Activated CD4-positive, alpha-beta memory T cell treated with anti-CD3 and anti-CD28 coated beads for 36 hours (primary cell): ENCODE measurements at regions of chr14 and their contacts with region 1.

Region 1: DNA sequence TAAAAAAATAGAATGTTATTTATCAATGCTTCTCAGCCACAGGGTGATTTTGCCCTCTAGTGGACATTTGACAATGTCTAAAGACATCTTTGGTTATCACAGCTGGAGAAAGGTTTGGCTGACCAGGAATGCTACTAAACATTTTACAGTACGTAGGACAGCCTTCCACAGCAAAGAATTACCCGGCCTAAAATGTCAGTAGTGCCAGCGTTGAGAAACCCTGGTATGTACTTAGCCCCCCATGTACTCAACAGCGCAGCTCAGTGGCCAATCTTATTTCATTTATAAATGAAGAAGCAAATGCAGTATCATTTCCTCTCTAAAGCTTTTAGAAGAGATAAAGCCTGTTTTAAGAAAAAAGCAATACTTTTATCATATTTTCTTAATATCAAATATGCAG is 5.8 kb downstream of the MARK3 start:
- DNase-seq: peak; percentile 47
- H3K4me3 Mint-ChIP-seq: no peak overlapping the region
- H3K27ac Mint-ChIP-seq: no peak overlapping the region
- H3K4me1 Mint-ChIP-seq: peaks cover 54% of the 10 kb centered on the region
- H3K27me3 Mint-ChIP-seq: no peaks in the 10 kb centered on the region

Region 2: DNA sequence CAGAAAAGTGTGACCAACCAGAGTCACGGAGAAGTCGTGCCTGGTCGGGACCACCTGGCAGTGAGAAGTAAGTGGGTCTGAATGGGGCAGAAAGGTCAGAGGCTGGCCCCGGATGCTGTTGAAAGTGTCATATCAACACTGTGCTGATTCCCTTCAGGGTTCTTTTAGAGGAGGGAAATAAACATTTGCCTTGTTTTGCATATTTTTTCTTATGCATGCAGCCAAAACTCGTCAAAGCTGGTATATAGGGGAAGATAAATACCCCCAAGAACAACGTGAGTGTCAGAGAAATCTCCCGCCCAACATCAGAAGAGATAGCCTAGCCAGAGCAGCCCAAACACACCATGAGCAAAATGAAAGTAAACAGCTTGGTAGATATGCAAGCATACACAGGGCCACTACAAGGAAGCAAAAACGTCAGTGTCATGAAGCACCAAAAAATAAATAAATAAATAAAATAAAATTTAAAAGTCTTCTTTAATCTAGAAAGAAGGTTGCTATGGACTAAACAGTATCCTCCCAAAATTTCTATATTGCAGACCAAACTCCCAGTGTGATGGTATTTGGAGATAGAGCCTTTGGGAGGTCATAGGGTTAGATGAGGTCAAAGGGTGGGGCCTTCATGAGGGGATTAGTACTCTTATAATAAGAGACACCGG is 34.9 kb before region 1 on chr14:
- CTCF ChIA-PET with region 1: interaction called, 22 read pairs
- POLR2A ChIA-PET with region 1: no interaction called
- intact Hi-C with region 1: no loop called
- DNase-seq: no peak
- H3K4me3 Mint-ChIP-seq: no peak overlapping the region
- H3K27ac Mint-ChIP-seq: no peak overlapping the region
- H3K4me1 Mint-ChIP-seq: peaks cover 6% of the 10 kb centered on the region
- H3K27me3 Mint-ChIP-seq: peaks cover 6% of the 10 kb centered on the region

Region 3: GRCh38 chr14:103401223-103402214 is 10.5 kb after region 1 on chr14:
- CTCF ChIA-PET with region 1: interaction called, 49 read pairs
- POLR2A ChIA-PET with region 1: no interaction called
- intact Hi-C with region 1: loop called (anchors 2 kb)
- DNase-seq: peak; percentile 32
- H3K4me3 Mint-ChIP-seq: no peak overlapping the region
- H3K27ac Mint-ChIP-seq: peak overlapping the region; percentile 83
- H3K4me1 Mint-ChIP-seq: peaks cover 60% of the 10 kb centered on the region
- H3K27me3 Mint-ChIP-seq: no peaks in the 10 kb centered on the region

Region 4: GRCh38 chr14:103427485-103428443 is 36.7 kb after region 1 on chr14:
- CTCF ChIA-PET with region 1: interaction called, 11 read pairs
- POLR2A ChIA-PET with region 1: no interaction called
- intact Hi-C with region 1: loop called (anchors 5 kb)
- DNase-seq: peak; percentile 62
- H3K4me3 Mint-ChIP-seq: no peak overlapping the region
- H3K27ac Mint-ChIP-seq: peak overlapping the region; percentile 70
- H3K4me1 Mint-ChIP-seq: peaks cover 56% of the 10 kb centered on the region
- H3K27me3 Mint-ChIP-seq: no peaks in the 10 kb centered on the region